ENCODE measurements at regions of chr5 and their contacts with region 1.

Region 1: DNA sequence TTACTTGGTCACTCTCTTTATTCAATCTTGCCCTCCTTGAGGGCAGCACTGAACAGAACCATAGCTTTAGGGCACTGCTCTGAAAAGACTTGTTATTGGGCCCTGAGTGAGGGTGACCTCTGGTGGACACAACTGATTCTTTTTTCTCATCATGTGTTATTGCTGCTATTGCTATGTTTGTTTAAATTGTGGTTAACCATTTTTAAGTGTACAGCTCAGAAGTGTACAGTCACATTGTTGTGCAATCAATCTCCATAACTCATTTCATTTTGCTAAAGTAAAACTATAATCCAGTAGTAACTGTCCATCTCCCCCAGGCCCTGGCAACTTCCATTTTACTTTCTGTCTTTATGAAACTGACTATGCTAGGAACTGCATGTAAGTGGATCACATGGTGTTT is 351.1 kb upstream of the RIOK2 start:
- DNase-seq: peak; percentile 41
- H3K4me3 ChIP-seq: no peak overlapping the region
- H3K27ac ChIP-seq: no peak overlapping the region
- H3K4me1 ChIP-seq: peaks cover 0 to 6% of the 10 kb centered on the region in 2 experiments; a peak in 2 of 4 replicates
- H3K27me3 ChIP-seq: no peaks in the 10 kb centered on the region
- CTCF ChIP-seq: peak; percentile 72
- EP300 ChIP-seq: no peak
- RAD21 ChIP-seq: peak; percentile 65

Region 2: GRCh38 chr5:97559827-97560598 is 25.8 kb after region 1 on chr5:
- CTCF ChIA-PET with region 1: interaction called, 10 read pairs
- POLR2A ChIA-PET with region 1: no interaction called
- DNase-seq: no peak
- H3K4me3 ChIP-seq: no peak overlapping the region
- H3K27ac ChIP-seq: no peak overlapping the region
- H3K4me1 ChIP-seq: no peaks in the 10 kb centered on the region
- H3K27me3 ChIP-seq: no peaks in the 10 kb centered on the region
- CTCF ChIP-seq: no peak
- EP300 ChIP-seq: no peak
- RAD21 ChIP-seq: no peak